ENCODE measurements at regions of chr7 and their contacts with region 1.

Region 1: GRCh38 chr7:490461-491291 is 29.0 kb downstream of the PDGFA start:
- DNase-seq: no peak
- ATAC-seq: peak; percentile 37; the same call in 1 of the 2 replicates
- H3K4me3 ChIP-seq: no peak overlapping the region
- H3K27ac ChIP-seq: no peak overlapping the region
- H3K4me1 ChIP-seq: peaks cover 11% of the 10 kb centered on the region; the same call in 1 of the 2 replicates
- H3K27me3 ChIP-seq: no peaks in the 10 kb centered on the region
- CTCF ChIP-seq: no peak

Region 2: DNA sequence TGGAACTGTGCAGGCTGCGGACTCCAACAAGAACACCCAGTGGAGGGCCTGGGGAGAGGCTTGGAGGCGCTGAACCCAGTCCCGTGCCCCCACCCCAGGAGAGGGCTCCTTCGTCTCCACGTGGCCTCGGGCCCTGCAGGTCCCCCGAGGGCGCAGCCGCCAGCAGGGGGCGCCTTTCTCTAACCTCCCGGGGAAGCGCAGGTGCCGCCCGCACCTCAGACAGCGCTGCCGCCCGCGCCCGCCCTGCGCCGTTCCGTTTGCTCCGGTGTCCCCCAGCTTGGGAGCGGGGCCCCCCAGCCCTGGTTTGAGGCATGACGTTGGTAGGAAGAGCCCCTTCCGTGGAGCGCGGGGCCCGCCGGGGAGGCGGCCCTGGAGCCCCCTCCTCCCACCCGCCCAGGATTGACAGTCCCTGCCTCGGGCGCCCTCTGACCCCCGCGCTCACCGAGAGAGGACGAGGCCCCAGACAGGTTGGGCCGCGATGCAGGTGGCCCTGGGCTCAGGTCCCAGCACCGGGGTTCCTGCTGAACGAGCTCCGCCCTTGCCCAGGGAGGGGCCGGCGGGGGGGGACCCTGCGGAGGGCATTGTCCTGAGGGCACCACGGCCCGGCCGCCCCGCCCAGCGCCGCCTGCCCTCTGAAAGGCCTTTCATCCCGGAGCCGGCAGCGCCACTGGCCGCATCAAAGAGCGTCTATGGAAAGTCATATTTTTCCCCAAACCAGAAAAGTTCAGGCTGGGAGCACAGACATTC is 157.9 kb before region 1 on chr7:
- CTCF ChIA-PET with region 1: no interaction called
- POLR2A ChIA-PET with region 1: no interaction called
- in situ Hi-C with region 1: loop called (anchors 10 kb)
- intact Hi-C with region 1: no loop called
- DNase-seq: no peak
- ATAC-seq: peak; percentile 98
- H3K4me3 ChIP-seq: peak overlapping the region; percentile 29 to 45
- H3K27ac ChIP-seq: no peak overlapping the region
- H3K4me1 ChIP-seq: no peaks in the 10 kb centered on the region; the same call in 1 of the 2 replicates
- H3K27me3 ChIP-seq: no peaks in the 10 kb centered on the region
- CTCF ChIP-seq: peak; percentile 96

Region 3: GRCh38 chr7:435630-436366 is 54.9 kb before region 1 on chr7:
- CTCF ChIA-PET with region 1: no interaction called
- POLR2A ChIA-PET with region 1: no interaction called
- in situ Hi-C with region 1: no loop called
- intact Hi-C with region 1: no loop called
- DNase-seq: no peak
- ATAC-seq: no peak
- H3K4me3 ChIP-seq: no peak overlapping the region
- H3K27ac ChIP-seq: no peak overlapping the region
- H3K4me1 ChIP-seq: no peaks in the 10 kb centered on the region; the same call in 1 of the 2 replicates
- H3K27me3 ChIP-seq: no peaks in the 10 kb centered on the region
- CTCF ChIP-seq: no peak